HEK293 (cell line): ENCODE measurements at regions of chr16 and their contacts with region 1.

Region 1: GRCh38 chr16:31142109-31143010 is 6.8 kb upstream of the PRSS8 start:
- H3K4me3 ChIP-seq: peak overlapping the region; percentile 27
- H3K27ac ChIP-seq: peak overlapping the region; percentile 63; the same call in 1 of the 2 replicates
- H3K4me1 ChIP-seq: no peaks in the 10 kb centered on the region; the same call in 1 of the 2 replicates
- CTCF ChIP-seq: peak; percentile 96

Region 2: GRCh38 chr16:31128711-31129567 is 13.4 kb before region 1 on chr16:
- CTCF ChIA-PET with region 1: interaction called, 13 read pairs
- POLR2A ChIA-PET with region 1: interaction called, 12 read pairs
- H3K4me3 ChIP-seq: no peak overlapping the region
- H3K27ac ChIP-seq: no peak overlapping the region
- H3K4me1 ChIP-seq: peaks cover under 1% of the 10 kb centered on the region; the same call in 1 of the 2 replicates
- CTCF ChIP-seq: no peak

Region 3: DNA sequence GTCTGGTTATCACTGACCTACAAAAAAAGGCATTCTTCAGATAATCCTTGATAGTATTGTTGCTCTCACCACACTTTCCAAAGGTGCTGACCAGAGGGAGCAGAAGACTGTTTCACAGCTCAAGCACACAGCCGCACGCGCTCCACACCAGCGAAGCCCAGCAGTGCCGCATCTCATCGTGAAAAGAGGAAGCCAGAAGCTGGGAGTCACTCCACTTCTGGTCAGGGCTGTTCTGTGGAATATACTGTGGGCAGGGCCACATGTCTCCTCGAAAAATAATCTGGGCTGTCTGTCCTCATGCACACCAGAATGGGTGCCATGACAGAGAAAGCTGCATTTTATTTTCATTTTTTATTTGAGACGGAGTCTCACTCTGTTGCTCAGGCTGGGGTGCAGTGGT is 14.8 kb after region 1 on chr16:
- CTCF ChIA-PET with region 1: interaction called, 15 read pairs
- POLR2A ChIA-PET with region 1: interaction called, 5 read pairs
- H3K4me3 ChIP-seq: no peak overlapping the region
- H3K27ac ChIP-seq: no peak overlapping the region
- H3K4me1 ChIP-seq: no peaks in the 10 kb centered on the region
- CTCF ChIP-seq: no peak